PC-9 (cell line): ENCODE measurements at regions of chr10 and their contacts with region 1.

Region 1: DNA sequence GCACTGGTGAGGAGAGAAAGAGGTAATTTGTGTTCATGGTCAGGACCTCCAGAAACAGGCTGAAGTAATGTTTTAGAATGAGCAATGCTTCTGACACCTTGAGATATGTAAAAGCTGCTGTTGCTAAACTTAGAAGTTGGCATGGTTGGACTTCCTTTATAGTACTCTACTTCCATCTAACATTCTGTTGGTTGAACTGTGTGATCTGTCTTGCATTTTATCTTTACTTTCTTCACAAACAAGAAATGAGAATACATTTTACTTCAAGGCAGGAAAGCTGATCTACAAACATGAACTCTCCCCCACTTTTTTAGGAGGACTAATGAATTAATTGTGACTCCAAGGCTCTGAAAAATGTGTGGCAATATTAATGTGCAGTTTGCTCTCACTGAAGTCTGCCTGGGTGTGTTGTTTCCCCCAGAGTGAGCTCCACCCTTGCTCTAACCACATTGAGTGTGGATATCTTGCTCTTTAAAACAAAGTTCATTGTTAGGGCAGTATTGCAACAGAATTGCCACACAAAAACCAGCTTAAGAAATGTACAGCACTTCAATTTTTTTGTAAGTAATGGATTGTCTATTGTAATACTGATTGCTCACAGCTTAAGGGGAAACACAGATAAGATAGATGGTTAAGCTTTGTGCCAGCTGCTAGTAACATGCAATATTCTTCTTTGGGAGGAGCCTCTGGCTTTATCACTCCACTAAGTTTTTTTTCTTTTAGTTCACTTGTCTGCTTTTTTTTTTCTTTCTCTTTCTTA is 69.0 kb downstream of the ADD3 start:
- DNase-seq: peak; percentile 33 to 88
- H3K4me3 ChIP-seq: peak overlapping the region; percentile 2; the same call in 1 of the 2 replicates
- H3K27ac ChIP-seq: peak overlapping the region; percentile 57
- H3K4me1 ChIP-seq: peaks cover 41% of the 10 kb centered on the region
- H3K27me3 ChIP-seq: no peaks in the 10 kb centered on the region
- CTCF ChIP-seq: no peak

Region 2: DNA sequence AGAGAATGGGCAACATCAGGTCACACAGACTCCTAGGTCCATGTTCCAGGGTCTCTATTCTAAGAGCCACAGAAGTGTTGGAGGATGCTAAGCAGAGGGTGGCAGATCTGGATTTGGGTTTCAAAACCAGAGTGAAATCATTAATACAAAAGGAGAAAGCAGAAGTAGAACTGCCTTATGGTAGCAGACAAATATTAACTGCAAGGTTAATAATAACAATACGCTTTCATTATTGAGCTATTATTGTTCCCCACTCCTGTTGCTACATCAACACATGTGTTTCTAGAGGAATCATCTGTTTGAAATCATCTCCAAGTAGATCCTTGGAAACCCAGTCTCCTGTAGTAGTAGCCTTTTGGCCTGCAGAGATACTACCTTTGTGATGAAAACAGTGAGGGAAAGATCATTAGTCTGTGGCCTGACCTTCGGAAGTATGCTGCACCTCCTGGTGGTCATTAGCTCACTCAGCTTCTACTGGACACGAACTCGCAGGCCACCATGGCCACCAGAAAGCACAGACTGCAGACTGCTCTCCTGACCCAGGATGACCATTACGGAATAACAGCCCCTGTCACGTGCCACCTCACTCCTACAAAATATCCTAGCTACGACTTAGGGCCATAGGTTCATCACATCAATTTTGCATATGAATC is 238.0 kb before region 1 on chr10:
- CTCF ChIA-PET with region 1: no interaction called
- POLR2A ChIA-PET with region 1: no interaction called
- intact Hi-C with region 1: no loop called
- DNase-seq: no peak
- H3K4me3 ChIP-seq: no peak overlapping the region
- H3K27ac ChIP-seq: no peak overlapping the region
- H3K4me1 ChIP-seq: no peaks in the 10 kb centered on the region
- H3K27me3 ChIP-seq: peaks cover 57% of the 10 kb centered on the region; the same call in 1 of the 2 replicates
- CTCF ChIP-seq: no peak

Region 3: DNA sequence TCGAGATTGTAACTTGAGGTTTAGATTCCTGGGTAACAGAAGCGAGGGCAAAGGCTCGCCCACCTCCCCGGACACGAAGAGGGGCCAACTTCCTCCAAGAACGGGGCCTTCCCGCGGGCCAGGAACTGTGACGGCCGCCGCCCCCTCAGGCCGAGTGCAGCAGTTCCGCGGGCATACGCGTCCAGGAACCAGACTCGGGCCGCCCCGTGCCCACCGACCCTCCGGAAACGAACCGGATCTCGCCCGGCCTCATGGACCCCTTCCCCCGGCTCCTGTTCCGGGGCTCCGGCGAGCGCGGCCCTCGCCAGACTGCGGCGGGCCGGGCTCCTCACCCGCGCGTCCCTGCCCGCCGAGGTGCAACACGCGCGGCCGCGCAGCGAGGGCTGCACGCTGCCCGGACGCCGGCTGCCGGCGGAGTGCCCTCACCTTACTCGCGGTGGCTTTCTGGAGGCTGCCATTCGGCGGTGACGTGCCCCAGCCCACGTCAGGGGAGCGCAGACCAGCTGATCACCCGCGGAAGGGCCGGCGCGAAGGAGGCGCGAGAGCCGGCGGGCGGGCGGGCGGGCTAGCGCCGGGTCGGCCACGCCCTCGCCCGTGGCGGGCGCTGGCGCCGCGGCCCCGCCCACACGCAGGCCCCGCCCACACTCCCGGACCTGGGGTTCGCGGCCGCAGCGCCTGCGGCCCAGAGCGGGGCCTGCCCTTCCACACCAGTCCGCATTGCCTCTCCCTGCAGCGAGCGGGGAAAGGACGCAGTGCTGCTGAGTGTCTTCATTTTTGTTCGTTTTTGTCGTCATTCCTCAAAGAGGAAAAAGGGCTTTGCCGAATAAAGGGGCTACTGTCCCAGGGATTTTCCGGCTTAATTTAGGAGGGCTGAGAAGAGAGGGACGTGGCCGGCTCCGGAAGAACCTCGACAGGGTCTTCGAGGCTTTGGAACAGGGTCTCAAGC is 153.5 kb before region 1 on chr10 and contains the start of gene XPNPEP1:
- CTCF ChIA-PET with region 1: no interaction called
- POLR2A ChIA-PET with region 1: no interaction called
- intact Hi-C with region 1: loop called (anchors 5 kb)
- DNase-seq: peak; percentile 52 to 68
- H3K4me3 ChIP-seq: peak within 1 kb of the TSS; percentile 69
- H3K27ac ChIP-seq: no peak within 1 kb of the TSS; the same call in 1 of the 2 replicates
- H3K4me1 ChIP-seq: peaks cover 11% of the 10 kb centered on the region; the same call in 1 of the 2 replicates
- H3K27me3 ChIP-seq: no peaks in the 10 kb centered on the region
- CTCF ChIP-seq: no peak
- total RNA-seq, gene XPNPEP1: 24.6 and 29.8 TPM in 2 replicates

Region 4: DNA sequence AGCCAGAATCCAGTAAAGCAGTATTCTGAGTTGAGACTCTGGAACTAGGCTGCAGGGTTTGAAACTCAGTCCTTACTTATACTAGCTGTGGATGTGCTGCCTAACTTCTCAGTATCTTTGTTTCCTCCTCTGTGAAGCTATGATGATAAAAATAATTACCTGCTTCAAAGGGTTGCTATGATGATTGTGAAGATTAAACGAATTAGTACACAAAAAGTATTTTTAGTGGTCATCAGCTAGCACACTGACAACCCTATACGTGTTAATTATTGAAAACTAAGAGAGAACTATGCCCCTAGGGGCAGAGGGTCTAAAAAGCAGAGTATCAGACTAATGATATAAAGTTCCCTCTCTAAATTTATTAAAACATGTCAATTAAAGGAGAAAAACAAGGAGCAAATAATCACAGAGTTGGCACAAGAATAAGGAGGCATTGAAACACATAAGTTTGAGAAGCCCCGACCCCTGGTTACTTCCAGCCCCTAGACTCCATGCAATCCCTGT is 103.4 kb before region 1 on chr10:
- CTCF ChIA-PET with region 1: no interaction called
- POLR2A ChIA-PET with region 1: interaction called, 13 read pairs
- intact Hi-C with region 1: no loop called
- DNase-seq: no peak
- H3K4me3 ChIP-seq: no peak overlapping the region
- H3K27ac ChIP-seq: no peak overlapping the region
- H3K4me1 ChIP-seq: no peaks in the 10 kb centered on the region
- H3K27me3 ChIP-seq: no peaks in the 10 kb centered on the region
- CTCF ChIP-seq: no peak

Region 5: DNA sequence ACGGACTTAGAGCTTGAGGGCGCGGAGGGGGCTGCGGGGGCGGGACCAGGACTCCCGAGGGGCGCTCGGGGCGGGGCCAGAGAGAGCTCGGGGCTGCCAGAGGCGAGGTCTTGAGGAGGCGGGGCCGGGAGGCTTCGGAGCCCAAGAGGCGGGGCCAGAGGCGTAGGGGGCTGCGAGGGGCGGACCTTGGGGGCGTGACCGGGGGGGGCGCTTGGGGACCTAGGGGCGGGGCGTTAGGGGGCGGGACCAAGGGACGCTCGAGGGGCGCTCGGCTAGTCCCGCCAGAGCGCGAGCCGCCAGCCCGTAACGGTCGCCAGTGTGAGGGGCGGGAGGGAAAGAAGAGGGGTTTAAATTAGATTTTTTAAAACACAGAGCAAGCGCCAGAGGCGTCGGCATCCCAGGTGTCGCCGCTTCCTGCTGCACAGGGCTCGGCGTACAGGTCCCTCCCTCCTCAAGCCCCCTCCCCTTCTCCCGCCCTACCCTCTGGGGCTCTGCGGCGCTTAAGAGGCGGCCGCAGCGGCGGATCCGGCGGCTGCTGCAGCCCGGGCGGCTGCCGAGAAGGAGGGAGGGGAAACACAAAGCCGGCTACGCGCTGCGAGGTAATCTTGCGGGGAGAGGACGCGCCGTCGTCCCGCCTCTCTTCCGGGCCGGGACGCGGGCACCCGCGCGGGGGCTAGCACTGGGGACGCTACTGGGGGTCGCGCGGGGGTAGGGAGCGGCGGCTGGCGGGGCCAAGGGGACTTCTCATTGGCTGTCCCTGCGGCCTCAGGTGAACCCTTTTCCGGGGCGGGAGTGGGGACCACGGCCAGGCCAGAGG is 68.8 kb before region 1 on chr10 and contains the start of gene ADD3:
- CTCF ChIA-PET with region 1: no interaction called
- POLR2A ChIA-PET with region 1: no interaction called
- intact Hi-C with region 1: loop called (anchors 2 kb)
- DNase-seq: peak; percentile 49 to 79
- H3K4me3 ChIP-seq: peak within 1 kb of the TSS; percentile 91
- H3K27ac ChIP-seq: no peak within 1 kb of the TSS
- H3K4me1 ChIP-seq: peaks cover 36% of the 10 kb centered on the region
- H3K27me3 ChIP-seq: no peaks in the 10 kb centered on the region
- CTCF ChIP-seq: no peak
- total RNA-seq, gene ADD3: 61.7 and 77.7 TPM in 2 replicates